Activated CD4-positive, alpha-beta memory T cell treated with anti-CD3 and anti-CD28 coated beads, Interleukin-2, amount 10 ng/mL, durations not matched to agents 7 days and 5 days (primary cell): ENCODE measurements at regions of chr1 and their contacts with region 1.

Region 1: GRCh38 chr1:26431979-26432695 is at the start of gene DHDDS:
- DNase-seq: peak; percentile 99
- H3K4me3 Mint-ChIP-seq: peak within 1 kb of the TSS; percentile 98
- H3K27ac Mint-ChIP-seq: peak within 1 kb of the TSS; percentile 92
- H3K4me1 Mint-ChIP-seq: peaks cover 24% of the 10 kb centered on the region
- H3K27me3 Mint-ChIP-seq: peaks cover 4% of the 10 kb centered on the region
- total RNA-seq, gene DHDDS: 49.7 to 52.3 TPM

Region 2: DNA sequence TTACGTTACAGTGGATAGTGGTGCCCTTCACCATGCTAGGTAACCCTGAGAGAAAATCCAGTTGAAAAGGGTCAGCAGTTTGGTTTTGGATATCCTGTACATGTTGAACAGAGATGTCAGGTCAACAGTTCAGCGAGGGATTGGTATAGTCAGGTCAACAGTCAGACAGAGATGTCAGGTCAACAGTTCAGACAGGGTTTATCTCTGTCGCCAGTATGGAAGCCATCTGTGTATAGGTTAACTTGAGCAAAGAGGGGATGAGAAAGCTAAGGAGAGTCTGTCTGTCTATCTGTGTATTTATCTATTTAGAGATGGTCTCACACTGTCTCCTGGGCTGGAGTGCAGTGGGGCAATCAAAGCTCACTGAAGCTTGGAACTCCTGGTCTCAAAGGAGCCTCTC is 17.7 kb after region 1 on chr1:
- CTCF ChIA-PET with region 1: interaction called, 4 read pairs
- POLR2A ChIA-PET with region 1: interaction called, 14 read pairs
- DNase-seq: no peak
- H3K4me3 Mint-ChIP-seq: no peak overlapping the region
- H3K27ac Mint-ChIP-seq: no peak overlapping the region
- H3K4me1 Mint-ChIP-seq: no peaks in the 10 kb centered on the region
- H3K27me3 Mint-ChIP-seq: no peaks in the 10 kb centered on the region